Dendritic cell treated with granulocyte-macrophage colony-stimulating factor and Interleukin-4, amounts not matched to agents 40 ng/mL and 50 ng/mL, for 4 days (primary cell): ENCODE measurements at regions of chr21 and their contacts with region 1.

Region 1: GRCh38 chr21:42021366-42022090 is 11.4 kb upstream of the ZBTB21 start:
- H3K4me3 Mint-ChIP-seq: no peak overlapping the region
- H3K27ac Mint-ChIP-seq: no peak overlapping the region
- H3K4me1 Mint-ChIP-seq: peaks cover 11% of the 10 kb centered on the region
- H3K27me3 Mint-ChIP-seq: peaks cover 22% of the 10 kb centered on the region

Region 2: GRCh38 chr21:42056996-42057689 is 35.6 kb after region 1 on chr21:
- intact Hi-C with region 1: loop called (anchors 5 kb)
- H3K4me3 Mint-ChIP-seq: no peak overlapping the region
- H3K27ac Mint-ChIP-seq: peak overlapping the region; percentile 97
- H3K4me1 Mint-ChIP-seq: peaks cover 79% of the 10 kb centered on the region
- H3K27me3 Mint-ChIP-seq: peaks cover 20% of the 10 kb centered on the region